Esophagus muscularis mucosa (tissue), 4 donors: ENCODE measurements at regions of chrX and their contacts with region 1.

Region 1: GRCh38 chrX:119871599-119872395 is at the starts of genes NDUFA1 and RNF113A:
- DNase-seq: peak; percentile 94
- H3K4me3 ChIP-seq: peak within 1 kb of the TSS; percentile 61 to 67 (median 64)
- H3K27ac ChIP-seq: peak within 1 kb of the TSS; percentile 89 to 92 (median 90)
- H3K4me1 ChIP-seq: peaks cover 3 to 33% (median 19%) of the 10 kb centered on the region in 4 donors
- H3K27me3 ChIP-seq: no peaks in the 10 kb centered on the region
- CTCF ChIP-seq: no peak
- EP300 ChIP-seq: no peak
- POLR2A ChIP-seq: no peak
- total RNA-seq, gene NDUFA1: 61.1 to 90.9 (median 65.5) TPM
- total RNA-seq, gene RNF113A: 9.1 to 14.9 (median 12.7) TPM

Region 2: DNA sequence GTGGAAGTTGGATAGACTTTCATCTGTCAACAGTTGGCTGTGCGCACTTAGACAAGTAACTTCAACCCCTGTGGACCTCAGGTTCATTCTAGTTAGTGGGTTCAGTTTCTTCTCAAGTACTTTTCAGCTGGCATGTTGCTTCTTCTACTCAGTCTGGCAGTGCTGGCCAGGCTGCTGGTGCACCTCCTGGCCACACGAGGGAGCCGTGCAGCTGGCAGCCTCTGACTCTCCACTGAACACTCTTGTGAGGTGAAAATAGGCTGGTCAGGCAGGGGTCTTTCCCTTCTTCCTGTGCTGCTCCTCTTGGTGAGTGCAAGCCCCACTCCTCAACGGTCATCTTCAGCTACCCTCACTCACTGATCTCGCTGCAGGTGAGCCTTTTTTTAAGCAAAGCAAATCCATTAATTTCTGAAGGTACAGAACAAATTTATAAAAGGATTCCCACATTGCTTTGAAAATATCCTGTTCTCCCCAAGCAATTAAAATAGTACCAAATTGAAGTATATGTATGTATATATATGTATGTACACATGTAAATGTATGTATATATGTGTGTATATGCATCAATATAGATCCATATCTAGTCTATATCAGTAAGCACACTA is 866.8 kb before region 1 on chrX:
- intact Hi-C with region 1: no loop called
- DNase-seq: no peak
- H3K4me3 ChIP-seq: no peak overlapping the region
- H3K27ac ChIP-seq: no peak overlapping the region
- H3K4me1 ChIP-seq: peaks cover 0 to 22% (median 20%) of the 10 kb centered on the region in 4 donors
- H3K27me3 ChIP-seq: no peaks in the 10 kb centered on the region
- CTCF ChIP-seq: peak; percentile 75 to 90 (median 83)
- EP300 ChIP-seq: no peak
- POLR2A ChIP-seq: no peak

Region 3: GRCh38 chrX:119745283-119745848 is 126.4 kb before region 1 on chrX:
- intact Hi-C with region 1: no loop called
- DNase-seq: no peak
- H3K4me3 ChIP-seq: no peak overlapping the region
- H3K27ac ChIP-seq: no peak overlapping the region
- H3K4me1 ChIP-seq: no peaks in the 10 kb centered on the region
- H3K27me3 ChIP-seq: no peaks in the 10 kb centered on the region
- CTCF ChIP-seq: no peak
- EP300 ChIP-seq: no peak
- POLR2A ChIP-seq: no peak

Region 4: GRCh38 chrX:119852382-119853353 is 19.1 kb before region 1 on chrX and contains the start of gene UPF3B:
- intact Hi-C with region 1: loop called (anchors 2 kb)
- DNase-seq: peak; percentile 97
- H3K4me3 ChIP-seq: peak within 1 kb of the TSS; percentile 65 to 77 (median 68)
- H3K27ac ChIP-seq: peak within 1 kb of the TSS; percentile 84 to 91 (median 90)
- H3K4me1 ChIP-seq: peaks cover 0 to 16% (median 8%) of the 10 kb centered on the region in 4 donors
- H3K27me3 ChIP-seq: no peaks in the 10 kb centered on the region
- CTCF ChIP-seq: no peak
- EP300 ChIP-seq: no peak
- POLR2A ChIP-seq: peak; percentile 39
- total RNA-seq, gene UPF3B: 4.1 to 7.1 (median 4.9) TPM

Region 5: GRCh38 chrX:120000490-120001246 is 128.9 kb after region 1 on chrX:
- intact Hi-C with region 1: no loop called
- DNase-seq: no peak
- H3K4me3 ChIP-seq: peak overlapping the region in 3 of 4 donors; percentile 3 to 13 (median 3)
- H3K27ac ChIP-seq: no peak overlapping the region
- H3K4me1 ChIP-seq: peaks cover 4 to 20% (median 16%) of the 10 kb centered on the region in 4 donors
- H3K27me3 ChIP-seq: peaks cover 0 to 62% (median 26%) of the 10 kb centered on the region in 4 donors
- CTCF ChIP-seq: no peak
- EP300 ChIP-seq: no peak
- POLR2A ChIP-seq: no peak